ENCODE measurements at regions of chr12 and their contacts with region 1.

Region 1: DNA sequence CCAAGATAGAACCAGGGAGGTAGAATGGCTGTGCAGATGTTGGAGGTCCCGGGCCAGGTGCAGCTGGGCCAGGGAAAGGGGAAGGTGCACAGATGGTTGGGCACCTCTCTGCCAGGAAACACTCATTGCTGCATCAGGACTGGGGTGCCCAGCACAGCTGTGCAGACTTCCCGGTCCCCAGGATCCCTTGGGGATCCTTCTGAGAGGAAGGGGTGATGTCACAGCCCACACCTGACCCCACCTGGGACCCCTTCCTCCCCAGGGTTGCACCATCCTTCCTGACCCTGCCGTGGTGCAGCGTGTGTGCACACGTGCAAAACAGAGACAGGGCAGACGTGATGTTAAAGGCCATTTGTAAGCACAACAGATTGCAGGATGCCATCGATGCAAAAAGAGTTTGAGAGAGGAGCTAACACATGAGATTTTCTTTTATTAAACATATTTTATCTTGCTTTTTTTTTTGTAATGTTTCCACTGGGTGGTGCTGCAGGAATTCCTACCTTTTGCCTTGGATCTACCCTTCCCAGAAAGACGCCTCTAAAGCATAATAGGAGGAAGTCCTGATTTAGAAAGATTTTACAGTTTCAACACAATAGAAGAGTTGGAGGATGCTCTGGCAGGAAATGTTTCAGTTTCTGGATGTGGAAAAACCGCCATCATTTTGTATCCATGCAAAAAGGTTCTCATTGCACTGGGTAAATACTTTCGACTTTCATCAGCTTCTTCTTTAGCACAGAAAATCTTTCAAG is 14.8 kb downstream of the ELK3 start:
- DNase-seq: no peak
- H3K4me3 ChIP-seq: no peak overlapping the region
- H3K27ac ChIP-seq: no peak overlapping the region
- H3K27me3 ChIP-seq: no peaks in the 10 kb centered on the region
- CTCF ChIP-seq: 0 out of 2 replicates have a peak, but pooled peaks have one; percentile 20

Region 2: GRCh38 chr12:96061864-96062453 is 147.0 kb before region 1 on chr12:
- CTCF ChIA-PET with region 1: interaction called, 158 read pairs
- POLR2A ChIA-PET with region 1: no interaction called
- DNase-seq: peak; percentile 69
- H3K4me3 ChIP-seq: no peak overlapping the region
- H3K27ac ChIP-seq: no peak overlapping the region
- H3K27me3 ChIP-seq: no peaks in the 10 kb centered on the region
- CTCF ChIP-seq: peak; percentile 84

Region 3: GRCh38 chr12:96227365-96228106 is 18.6 kb after region 1 on chr12:
- CTCF ChIA-PET with region 1: no interaction called
- POLR2A ChIA-PET with region 1: no interaction called
- DNase-seq: no peak
- H3K4me3 ChIP-seq: no peak overlapping the region
- H3K27ac ChIP-seq: no peak overlapping the region
- H3K27me3 ChIP-seq: no peaks in the 10 kb centered on the region
- CTCF ChIP-seq: no peak